OCI-LY7 (cell line): ENCODE measurements at regions of chr5 and their contacts with region 1.

Region 1: DNA sequence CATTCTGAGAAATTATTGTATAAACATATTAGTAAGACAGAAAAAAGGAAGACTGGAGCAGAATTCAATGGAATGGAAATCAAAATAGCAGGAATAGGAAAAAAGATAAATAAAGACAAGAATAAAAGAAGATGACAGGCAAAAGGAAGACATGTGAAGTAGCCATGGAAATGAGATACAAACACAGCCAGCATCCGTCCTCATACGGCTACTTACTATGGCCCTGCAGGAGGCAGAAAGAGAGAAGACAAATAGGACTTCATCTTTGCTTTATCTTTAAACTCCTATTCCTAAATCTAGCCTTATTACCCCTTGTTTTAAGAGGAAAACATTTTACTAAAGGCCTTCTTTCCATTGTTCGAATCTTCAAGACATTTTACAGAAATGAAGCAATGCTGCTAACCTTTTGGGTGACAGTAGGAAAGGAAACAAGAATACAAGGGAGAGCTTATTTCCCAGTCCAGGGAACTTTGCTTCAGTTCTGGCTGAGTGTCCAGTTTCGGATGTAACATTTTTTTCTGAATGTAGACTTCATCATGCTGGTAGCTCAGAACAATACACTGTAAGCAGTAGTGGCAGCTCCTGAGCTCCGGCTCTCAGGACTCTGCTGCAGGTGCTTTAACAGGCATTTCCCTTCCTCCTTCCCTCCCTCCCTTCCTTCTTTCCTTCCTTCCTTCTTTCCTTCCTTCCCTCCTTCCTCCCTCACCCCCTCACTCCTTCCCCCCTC is 106.4 kb upstream of the SLC12A2 start:
- DNase-seq: no peak
- H3K4me3 ChIP-seq: no peak overlapping the region
- H3K27ac ChIP-seq: no peak overlapping the region
- H3K4me1 ChIP-seq: peaks cover 6% of the 10 kb centered on the region
- CTCF ChIP-seq: no peak

Region 2: GRCh38 chr5:128037027-128037426 is 59.9 kb after region 1 on chr5:
- CTCF ChIA-PET with region 1: no interaction called
- POLR2A ChIA-PET with region 1: interaction called, 10 read pairs
- intact Hi-C with region 1: no loop called
- DNase-seq: no peak
- H3K4me3 ChIP-seq: no peak overlapping the region
- H3K27ac ChIP-seq: no peak overlapping the region
- H3K4me1 ChIP-seq: no peaks in the 10 kb centered on the region
- CTCF ChIP-seq: no peak